GM12878 (cell line): ENCODE measurements at regions of chr10 and their contacts with region 1.

Region 1: GRCh38 chr10:29443745-29444523 is 155.1 kb downstream of the LYZL1 start:
- DNase-seq: no peak
- ATAC-seq: peak; percentile 41
- H3K4me3 ChIP-seq: no peak overlapping the region
- H3K27ac ChIP-seq: no peak overlapping the region
- H3K4me1 ChIP-seq: no peaks in the 10 kb centered on the region
- H3K27me3 ChIP-seq: no peaks in the 10 kb centered on the region
- CTCF ChIP-seq: no peak
- EP300 ChIP-seq: no peak
- POLR2A ChIP-seq: no peak
- RAD21 ChIP-seq: no peak

Region 2: DNA sequence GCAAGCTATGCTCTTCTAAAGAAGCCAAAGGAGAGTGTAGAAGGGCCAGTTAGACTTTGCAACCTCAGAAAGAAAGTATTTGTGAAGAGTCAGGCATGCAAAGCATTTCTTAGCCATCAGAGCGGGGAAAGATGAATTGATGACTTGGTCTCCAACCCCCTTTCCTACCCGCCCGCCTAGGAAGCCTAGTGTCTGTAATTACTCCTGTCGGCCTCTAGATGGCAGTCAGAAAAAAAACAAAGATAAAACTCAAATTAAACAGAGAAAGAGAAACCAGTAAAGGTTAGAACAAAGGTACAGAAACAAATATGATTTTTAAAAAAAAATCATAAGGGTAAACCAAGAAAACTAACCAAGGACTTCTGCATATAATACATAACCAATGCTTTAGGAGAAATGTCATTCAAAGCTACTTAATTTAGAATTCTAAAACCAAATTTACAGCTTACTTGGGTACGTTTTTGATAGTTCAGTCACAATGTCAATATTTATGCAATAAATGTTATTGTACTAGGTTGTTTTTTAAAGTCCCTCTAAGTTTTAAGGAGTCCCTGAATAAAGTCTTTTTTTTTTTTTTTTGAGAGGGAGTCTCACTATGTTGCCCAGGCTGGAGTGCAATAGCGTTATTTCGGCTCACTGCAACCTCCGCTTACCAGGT is 57.5 kb before region 1 on chr10:
- CTCF ChIA-PET with region 1: interaction called, 6 read pairs
- POLR2A ChIA-PET with region 1: no interaction called
- RAD21 ChIA-PET with region 1: no interaction called
- SMC1A ChIA-PET with region 1: interaction called, 6 read pairs
- in situ Hi-C with region 1: no loop called
- intact Hi-C with region 1: loop called (anchors 5 kb)
- DNase-seq: no peak
- ATAC-seq: peak; percentile 71
- H3K4me3 ChIP-seq: no peak overlapping the region
- H3K27ac ChIP-seq: no peak overlapping the region
- H3K4me1 ChIP-seq: no peaks in the 10 kb centered on the region
- H3K27me3 ChIP-seq: peaks cover 0 to 2% of the 10 kb centered on the region in 2 experiments; a peak in 1 of 4 replicates
- CTCF ChIP-seq: peak; percentile 48 to 68 (median 61)
- EP300 ChIP-seq: no peak
- POLR2A ChIP-seq: no peak
- RAD21 ChIP-seq: peak; percentile 54